ENCODE measurements at regions of chr2 and their contacts with region 1.

Region 1: GRCh38 chr2:10434886-10435819 is 13.0 kb downstream of the ODC1 start:
- H3K4me3 ChIP-seq: no peak overlapping the region
- H3K27ac ChIP-seq: no peak overlapping the region
- H3K4me1 ChIP-seq: no peaks in the 10 kb centered on the region
- CTCF ChIP-seq: peak; percentile 92

Region 2: DNA sequence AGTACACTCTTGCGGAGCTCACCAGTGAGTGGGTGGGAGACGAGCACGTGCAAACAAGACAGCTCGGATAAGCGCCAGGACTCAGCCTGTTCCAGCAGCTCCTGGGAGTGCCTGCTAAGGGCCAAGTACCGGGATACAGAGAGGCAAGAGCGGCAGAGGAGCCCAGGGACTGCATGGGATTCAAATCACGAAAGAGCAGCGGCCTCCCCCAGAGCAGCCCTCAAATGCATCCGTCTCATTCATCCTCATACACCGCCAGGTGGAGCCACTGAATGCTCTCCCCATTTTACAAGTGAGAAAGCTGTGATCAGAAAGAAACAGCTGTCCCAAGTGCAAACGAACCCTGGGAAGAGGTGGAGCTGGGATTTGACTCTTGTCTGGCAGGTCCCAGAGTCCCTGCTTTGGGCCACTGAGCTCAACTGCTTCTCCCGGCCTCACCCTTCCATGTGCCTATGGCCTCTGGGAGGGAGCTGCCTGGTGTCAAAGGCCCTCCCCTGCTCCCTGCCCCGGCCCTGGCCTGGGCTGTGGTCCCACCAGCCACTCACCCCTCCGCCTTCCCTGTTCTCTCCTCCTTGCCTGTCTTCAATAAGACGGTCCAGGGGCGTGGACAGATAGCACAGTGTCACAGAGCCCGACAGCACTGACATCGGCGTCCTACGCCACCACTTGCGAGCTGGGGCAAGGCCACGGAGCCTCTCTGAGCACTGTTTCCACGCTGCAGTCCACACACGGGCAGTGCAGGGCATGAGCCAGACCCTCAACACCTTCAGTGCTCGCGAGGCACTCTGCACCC is 664.6 kb before region 1 on chr2:
- CTCF ChIA-PET with region 1: interaction called, 12 read pairs
- POLR2A ChIA-PET with region 1: no interaction called
- H3K4me3 ChIP-seq: no peak overlapping the region
- H3K27ac ChIP-seq: no peak overlapping the region
- H3K4me1 ChIP-seq: no peaks in the 10 kb centered on the region
- CTCF ChIP-seq: 0 out of 2 replicates have a peak, but pooled peaks have one; percentile 39

Region 3: DNA sequence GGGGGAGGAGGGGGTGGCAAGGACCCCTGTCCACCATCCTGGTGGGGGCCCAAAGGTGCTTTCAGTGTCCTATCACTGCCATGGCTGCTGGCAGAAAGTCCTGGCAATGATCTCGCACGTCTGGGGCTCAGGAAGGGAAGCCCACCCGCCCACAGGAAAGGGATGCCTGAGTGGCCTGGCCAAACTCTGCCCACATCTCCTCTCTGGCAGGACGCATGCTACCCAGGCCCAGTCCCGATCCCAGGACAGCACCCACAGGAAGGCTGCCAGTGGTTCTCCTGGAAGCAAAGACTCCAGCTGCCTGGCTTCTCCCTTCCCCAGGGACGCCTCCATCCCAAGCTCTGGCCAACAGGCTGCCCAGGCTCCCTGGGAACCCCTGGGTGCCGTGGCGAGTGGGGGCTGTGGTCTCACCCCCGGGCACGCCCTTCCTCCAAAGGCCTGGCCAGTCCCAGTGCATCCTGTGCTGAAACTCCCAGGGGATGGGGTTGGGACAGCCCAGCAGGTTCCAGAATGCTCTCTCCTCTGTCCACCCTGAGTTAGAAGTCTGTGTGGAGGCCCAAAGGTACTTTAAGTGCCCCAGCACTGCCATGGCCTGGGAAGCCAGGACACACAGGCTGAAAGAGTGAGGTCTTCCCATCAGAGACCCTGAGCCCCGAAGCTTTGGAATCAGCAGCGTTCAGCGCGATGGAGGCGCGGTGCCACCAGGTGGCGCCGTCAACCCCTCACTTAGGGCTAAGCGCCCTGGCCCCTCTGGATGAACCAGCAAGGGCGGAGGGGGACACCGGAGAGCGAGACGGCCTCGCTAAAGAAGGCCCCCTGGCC is 621.6 kb before region 1 on chr2:
- CTCF ChIA-PET with region 1: interaction called, 11 read pairs
- POLR2A ChIA-PET with region 1: no interaction called
- H3K4me3 ChIP-seq: no peak overlapping the region
- H3K27ac ChIP-seq: no peak overlapping the region
- H3K4me1 ChIP-seq: no peaks in the 10 kb centered on the region
- CTCF ChIP-seq: peak; percentile 86

Region 4: DNA sequence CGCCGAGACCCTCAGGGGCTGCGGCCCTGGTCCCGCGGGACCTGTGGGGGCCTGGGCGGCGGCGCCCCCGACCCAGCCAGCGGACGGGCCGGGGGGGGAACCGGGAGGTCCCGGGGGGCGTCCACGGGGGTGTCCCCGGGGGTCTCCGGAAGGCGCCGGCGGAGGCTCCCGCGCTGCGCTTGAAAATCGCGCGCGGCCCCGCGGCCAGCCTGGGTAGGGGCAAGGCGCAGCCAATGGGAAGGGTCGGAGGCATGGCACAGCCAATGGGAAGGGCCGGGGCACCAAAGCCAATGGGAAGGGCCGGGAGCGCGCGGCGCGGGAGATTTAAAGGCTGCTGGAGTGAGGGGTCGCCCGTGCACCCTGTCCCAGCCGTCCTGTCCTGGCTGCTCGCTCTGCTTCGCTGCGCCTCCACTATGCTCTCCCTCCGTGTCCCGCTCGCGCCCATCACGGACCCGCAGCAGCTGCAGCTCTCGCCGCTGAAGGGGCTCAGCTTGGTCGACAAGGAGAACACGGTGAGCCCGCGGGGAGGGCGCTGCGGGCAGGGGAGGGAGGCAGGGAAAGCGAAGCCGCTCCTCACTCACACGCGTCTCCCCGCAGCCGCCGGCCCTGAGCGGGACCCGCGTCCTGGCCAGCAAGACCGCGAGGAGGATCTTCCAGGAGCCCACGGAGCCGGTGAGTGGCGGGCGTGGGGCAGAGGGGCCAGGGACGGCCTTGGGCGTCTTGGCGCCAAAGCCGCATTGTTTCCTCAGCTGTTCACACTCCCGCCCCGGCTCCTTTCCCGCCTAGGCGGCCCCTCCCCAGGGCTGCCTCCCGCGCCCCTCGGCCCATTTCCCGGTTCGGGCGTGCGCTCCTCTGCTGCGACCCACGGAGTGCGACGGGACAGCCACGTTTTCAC is 312.5 kb before region 1 on chr2 and contains the start of gene RRM2:
- CTCF ChIA-PET with region 1: interaction called, 64 read pairs
- POLR2A ChIA-PET with region 1: interaction called, 5 read pairs
- H3K4me3 ChIP-seq: peak within 1 kb of the TSS; percentile 70
- H3K27ac ChIP-seq: peak within 1 kb of the TSS; percentile 97
- H3K4me1 ChIP-seq: peaks cover 5% of the 10 kb centered on the region; the same call in 1 of the 2 replicates
- CTCF ChIP-seq: peak; percentile 87

Region 5: GRCh38 chr2:10408649-10409579 is 26.2 kb before region 1 on chr2:
- CTCF ChIA-PET with region 1: interaction called, 50 read pairs
- POLR2A ChIA-PET with region 1: no interaction called
- H3K4me3 ChIP-seq: no peak overlapping the region
- H3K27ac ChIP-seq: no peak overlapping the region
- H3K4me1 ChIP-seq: no peaks in the 10 kb centered on the region
- CTCF ChIP-seq: peak; percentile 91

Region 6: DNA sequence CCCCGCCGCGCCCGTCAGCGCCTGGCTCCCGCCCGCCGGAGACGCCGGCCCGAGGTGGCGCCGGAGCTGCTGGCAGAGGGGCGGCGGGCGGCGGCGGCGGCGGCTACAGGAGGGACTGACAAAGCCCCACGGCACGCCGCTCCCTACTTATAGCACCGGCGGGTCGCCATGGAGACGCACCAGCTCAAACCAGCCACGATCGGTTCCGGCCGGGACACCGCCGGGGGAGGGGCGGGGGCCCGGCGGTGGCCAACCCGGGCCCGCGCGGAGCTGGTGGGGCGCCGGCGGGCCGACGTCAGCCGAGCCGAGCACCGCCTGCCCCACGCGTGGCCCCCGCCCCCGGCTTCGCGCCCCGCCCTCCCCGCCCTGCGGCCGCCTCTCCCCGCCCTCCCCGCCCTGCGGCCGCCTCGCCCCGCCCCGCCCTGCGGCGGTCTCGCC is 13.1 kb after region 1 on chr2 and contains the start of gene ODC1:
- CTCF ChIA-PET with region 1: interaction called, 57 read pairs
- POLR2A ChIA-PET with region 1: interaction called, 17 read pairs
- H3K4me3 ChIP-seq: peak within 1 kb of the TSS; percentile 44
- H3K27ac ChIP-seq: peak within 1 kb of the TSS; percentile 86
- H3K4me1 ChIP-seq: peaks cover 11% of the 10 kb centered on the region
- CTCF ChIP-seq: no peak

Region 7: GRCh38 chr2:10477443-10478297 is 42.5 kb after region 1 on chr2:
- CTCF ChIA-PET with region 1: no interaction called
- POLR2A ChIA-PET with region 1: no interaction called
- H3K4me3 ChIP-seq: no peak overlapping the region
- H3K27ac ChIP-seq: no peak overlapping the region
- H3K4me1 ChIP-seq: no peaks in the 10 kb centered on the region
- CTCF ChIP-seq: no peak